ENCODE measurements at regions of chr6 and their contacts with region 1.

Region 1: DNA sequence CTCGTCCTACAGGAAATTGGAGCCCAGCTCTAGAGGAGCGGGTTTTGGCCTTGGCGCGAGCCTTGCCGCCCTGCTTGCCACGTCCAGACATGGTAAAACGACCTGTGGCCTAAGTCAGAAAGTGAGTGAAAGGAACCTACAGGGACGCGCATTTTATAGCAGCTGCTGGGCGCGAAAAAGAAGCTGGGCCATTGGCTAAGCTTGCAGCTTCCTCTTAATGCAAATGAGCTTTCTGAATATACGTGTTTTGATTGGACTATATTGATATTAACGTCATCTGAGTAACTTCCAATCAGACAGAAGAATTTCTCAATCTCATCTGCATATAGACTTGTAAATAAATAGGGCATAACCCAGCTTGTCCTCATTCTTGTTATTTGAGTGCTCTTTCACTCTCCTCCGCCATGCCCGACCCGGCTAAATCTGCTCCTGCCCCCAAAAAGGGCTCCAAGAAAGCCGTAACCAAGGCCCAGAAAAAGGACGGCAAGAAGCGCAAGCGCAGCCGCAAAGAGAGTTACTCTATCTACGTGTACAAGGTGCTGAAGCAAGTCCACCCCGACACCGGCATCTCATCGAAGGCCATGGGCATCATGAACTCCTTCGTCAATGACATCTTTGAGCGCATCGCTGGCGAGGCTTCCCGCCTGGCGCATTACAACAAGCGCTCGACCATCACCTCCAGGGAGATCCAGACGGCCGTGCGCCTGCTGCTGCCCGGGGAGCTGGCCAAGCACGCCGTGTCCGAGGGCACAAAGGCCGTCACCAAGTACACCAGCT is 18.9 kb downstream of the OR2B2 start:
- DNase-seq: peak; percentile 86

Region 2: DNA sequence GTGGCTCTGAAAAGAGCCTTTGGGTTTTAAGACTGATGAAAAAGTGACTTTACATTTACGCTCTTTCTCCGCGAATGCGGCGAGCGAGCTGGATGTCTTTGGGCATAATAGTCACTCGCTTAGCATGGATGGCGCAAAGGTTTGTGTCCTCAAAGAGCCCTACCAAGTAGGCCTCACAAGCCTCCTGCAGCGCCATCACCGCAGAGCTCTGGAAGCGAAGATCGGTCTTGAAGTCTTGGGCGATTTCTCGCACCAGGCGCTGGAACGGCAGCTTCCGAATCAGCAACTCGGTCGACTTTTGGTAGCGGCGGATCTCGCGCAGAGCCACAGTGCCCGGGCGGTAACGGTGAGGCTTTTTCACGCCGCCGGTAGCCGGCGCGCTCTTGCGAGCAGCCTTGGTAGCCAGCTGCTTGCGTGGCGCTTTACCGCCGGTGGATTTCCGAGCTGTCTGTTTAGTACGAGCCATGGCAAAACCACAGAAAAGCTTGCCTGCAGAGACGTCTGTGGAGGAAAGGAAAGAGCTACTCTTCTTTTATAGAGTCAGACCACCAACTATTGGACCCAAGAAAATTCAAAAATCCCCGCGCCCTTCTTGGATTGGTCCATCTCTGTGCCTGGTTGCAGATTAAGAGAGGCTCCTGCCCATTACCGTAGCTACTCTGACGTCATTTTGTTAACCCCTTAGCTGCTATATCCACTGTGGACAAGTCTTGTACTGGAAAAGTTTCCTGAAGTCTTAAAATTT is 1861.5 kb before region 1 on chr6:
- CTCF ChIA-PET with region 1: interaction called, 3 read pairs
- POLR2A ChIA-PET with region 1: interaction called, 39 read pairs
- DNase-seq: peak; percentile 85

Region 3: DNA sequence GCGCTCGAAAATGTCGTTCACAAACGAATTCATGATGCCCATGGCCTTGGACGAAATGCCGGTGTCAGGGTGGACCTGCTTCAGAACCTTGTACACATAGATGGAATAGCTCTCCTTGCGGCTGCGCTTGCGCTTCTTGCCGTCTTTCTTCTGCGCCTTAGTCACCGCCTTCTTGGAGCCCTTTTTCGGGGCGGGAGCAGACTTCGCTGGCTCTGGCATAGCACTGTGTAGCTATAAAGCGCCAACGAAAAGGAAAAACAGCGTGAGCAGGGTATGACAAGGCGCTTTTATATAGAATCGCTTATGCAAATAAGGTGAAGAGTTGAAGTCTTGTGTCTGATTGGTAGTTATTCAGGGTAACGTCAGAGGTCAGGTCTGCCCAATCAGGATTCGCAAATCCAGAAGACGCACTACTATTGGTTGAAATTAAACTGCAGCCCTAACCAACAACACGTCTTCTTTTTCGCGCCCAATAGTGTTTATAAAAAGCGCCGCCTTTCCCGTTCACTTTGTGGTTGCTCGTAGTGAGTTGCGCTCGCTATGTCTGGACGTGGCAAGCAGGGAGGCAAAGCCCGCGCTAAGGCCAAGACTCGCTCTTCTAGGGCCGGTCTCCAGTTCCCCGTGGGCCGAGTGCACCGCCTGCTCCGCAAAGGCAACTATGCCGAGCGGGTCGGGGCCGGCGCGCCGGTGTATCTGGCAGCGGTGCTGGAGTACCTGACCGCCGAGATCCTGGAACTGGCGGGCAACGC is 760.5 kb before region 1 on chr6:
- CTCF ChIA-PET with region 1: no interaction called
- POLR2A ChIA-PET with region 1: interaction called, 60 read pairs
- DNase-seq: peak; percentile 85

Region 4: DNA sequence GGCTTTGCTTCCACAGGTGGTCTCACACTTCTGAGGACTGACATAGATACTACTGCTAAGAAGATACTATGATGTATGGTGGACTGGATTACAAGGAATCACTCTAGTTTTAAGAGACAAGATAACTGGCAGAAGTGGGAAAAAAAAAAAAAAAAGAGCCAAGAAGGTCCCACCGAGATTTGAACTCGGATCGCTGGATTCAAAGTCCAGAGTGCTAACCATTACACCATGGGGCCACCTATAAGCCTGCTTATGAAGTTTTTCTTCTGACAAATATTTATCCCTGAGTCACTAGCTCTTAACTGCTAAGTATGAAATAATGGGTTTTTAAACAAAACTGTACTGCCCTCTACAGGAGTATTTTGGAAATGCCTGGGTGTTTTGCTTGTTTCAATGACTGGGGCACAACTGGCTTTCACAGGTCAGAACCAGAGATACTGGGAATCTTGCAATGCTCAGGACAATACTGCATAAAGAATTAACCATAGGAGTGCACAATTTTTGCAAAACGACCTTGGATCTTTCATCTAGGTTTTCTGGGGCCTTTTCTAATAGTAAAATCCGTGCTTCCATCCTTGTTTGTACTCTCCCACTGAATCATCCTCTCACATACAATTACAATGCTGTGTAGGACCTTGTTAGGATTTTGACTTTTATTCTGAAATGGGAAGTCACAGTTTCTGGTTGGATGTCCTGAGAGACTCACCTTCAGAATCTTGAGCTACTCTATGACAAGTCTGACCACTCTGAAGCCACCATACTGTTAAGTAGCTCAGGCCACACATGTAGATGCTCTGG is 97.4 kb before region 1 on chr6:
- CTCF ChIA-PET with region 1: interaction called, 3 read pairs
- POLR2A ChIA-PET with region 1: interaction called, 20 read pairs
- DNase-seq: peak; percentile 69

Region 5: GRCh38 chr6:27838058-27838944 is 54.9 kb before region 1 on chr6:
- CTCF ChIA-PET with region 1: interaction called, 4 read pairs
- POLR2A ChIA-PET with region 1: interaction called, 422 read pairs
- DNase-seq: peak; percentile 79

Region 6: GRCh38 chr6:27879837-27880236 is 13.4 kb before region 1 on chr6:
- CTCF ChIA-PET with region 1: no interaction called
- POLR2A ChIA-PET with region 1: interaction called, 321 read pairs
- DNase-seq: no peak

Region 7: DNA sequence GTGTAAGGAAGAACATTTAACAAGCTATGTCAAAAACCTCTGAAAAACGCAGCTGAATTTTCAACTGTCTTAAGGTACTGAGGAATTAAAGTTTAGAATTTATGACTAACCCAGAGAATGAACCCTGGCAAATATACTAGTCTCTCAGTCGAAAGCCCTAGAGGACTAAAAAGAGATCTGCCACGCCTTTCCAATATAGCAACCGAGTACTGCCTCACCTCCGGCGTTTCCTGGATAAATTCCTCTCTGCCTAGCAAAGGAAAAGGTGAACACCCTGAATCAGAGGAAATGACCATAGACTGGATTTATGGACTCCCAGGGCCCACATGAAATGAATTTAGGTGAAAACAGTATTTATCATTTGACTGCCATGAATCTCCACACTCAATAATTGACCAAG is 30.9 kb after region 1 on chr6:
- CTCF ChIA-PET with region 1: no interaction called
- POLR2A ChIA-PET with region 1: no interaction called
- DNase-seq: no peak

Measured in HEK293T (cell line).